ENCODE measurements at regions of chr13 and their contacts with region 1.

Region 1: GRCh38 chr13:50594276-50595051 is 249.0 kb downstream of the DLEU7 start:
- DNase-seq: peak; percentile 71
- H3K4me3 Mint-ChIP-seq: peak overlapping the region; percentile 62
- H3K27ac Mint-ChIP-seq: peak overlapping the region; percentile 82
- H3K4me1 Mint-ChIP-seq: peaks cover 34% of the 10 kb centered on the region
- H3K27me3 Mint-ChIP-seq: peaks cover 3% of the 10 kb centered on the region

Region 2: DNA sequence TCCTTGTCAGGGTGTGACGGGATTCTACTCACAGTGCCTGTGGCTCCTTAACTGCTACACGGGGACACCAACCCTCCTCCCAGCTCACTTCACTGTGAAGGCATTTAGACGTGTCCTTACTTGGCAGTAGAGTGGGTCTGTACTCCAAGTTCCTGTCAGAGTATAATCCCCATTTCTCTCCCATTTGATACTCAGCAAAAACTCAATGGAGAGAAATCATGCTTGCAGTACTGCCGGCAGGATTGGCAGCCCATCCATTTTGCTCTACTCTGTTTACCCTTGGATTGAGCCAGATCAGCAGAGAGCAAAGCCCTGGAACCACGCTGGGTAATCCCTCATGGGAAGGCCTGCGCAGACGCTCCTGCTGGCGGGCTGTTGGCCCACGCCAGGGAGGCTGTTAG is 937.2 kb before region 1 on chr13:
- intact Hi-C with region 1: no loop called
- DNase-seq: no peak
- H3K4me3 Mint-ChIP-seq: no peak overlapping the region
- H3K27ac Mint-ChIP-seq: no peak overlapping the region
- H3K4me1 Mint-ChIP-seq: no peaks in the 10 kb centered on the region
- H3K27me3 Mint-ChIP-seq: no peaks in the 10 kb centered on the region

Region 3: GRCh38 chr13:50611117-50611781 is 16.8 kb after region 1 on chr13:
- intact Hi-C with region 1: loop called (anchors 2 kb)
- DNase-seq: peak; percentile 82
- H3K4me3 Mint-ChIP-seq: no peak overlapping the region
- H3K27ac Mint-ChIP-seq: no peak overlapping the region
- H3K4me1 Mint-ChIP-seq: peaks cover 8% of the 10 kb centered on the region
- H3K27me3 Mint-ChIP-seq: peaks cover 25% of the 10 kb centered on the region

Measured in activated CD4-positive, alpha-beta T cell treated with anti-CD3 and anti-CD28 coated beads, Interleukin-2, amount 10 ng/mL, durations not matched to agents 24 days and 14 days (primary cell).